CD4-positive, alpha-beta T cell (primary cell): ENCODE measurements at regions of chr11 and their contacts with region 1.

Region 1: GRCh38 chr11:111422494-111423249 is 43.6 kb upstream of the POU2AF1 start:
- DNase-seq: peak; percentile 10 to 59 (median 30)
- ATAC-seq: peak; percentile 64
- H3K4me3 ChIP-seq: no peak overlapping the region
- H3K4me3 Mint-ChIP-seq: no peak overlapping the region
- H3K27ac ChIP-seq: no peak overlapping the region
- H3K27ac Mint-ChIP-seq: no peak overlapping the region
- H3K4me1 ChIP-seq: peaks cover 3% of the 10 kb centered on the region
- H3K4me1 Mint-ChIP-seq: peaks cover 6% of the 10 kb centered on the region
- H3K27me3 ChIP-seq: no peaks in the 10 kb centered on the region
- H3K27me3 Mint-ChIP-seq: no peaks in the 10 kb centered on the region
- CTCF ChIP-seq: peak; percentile 66

Region 2: DNA sequence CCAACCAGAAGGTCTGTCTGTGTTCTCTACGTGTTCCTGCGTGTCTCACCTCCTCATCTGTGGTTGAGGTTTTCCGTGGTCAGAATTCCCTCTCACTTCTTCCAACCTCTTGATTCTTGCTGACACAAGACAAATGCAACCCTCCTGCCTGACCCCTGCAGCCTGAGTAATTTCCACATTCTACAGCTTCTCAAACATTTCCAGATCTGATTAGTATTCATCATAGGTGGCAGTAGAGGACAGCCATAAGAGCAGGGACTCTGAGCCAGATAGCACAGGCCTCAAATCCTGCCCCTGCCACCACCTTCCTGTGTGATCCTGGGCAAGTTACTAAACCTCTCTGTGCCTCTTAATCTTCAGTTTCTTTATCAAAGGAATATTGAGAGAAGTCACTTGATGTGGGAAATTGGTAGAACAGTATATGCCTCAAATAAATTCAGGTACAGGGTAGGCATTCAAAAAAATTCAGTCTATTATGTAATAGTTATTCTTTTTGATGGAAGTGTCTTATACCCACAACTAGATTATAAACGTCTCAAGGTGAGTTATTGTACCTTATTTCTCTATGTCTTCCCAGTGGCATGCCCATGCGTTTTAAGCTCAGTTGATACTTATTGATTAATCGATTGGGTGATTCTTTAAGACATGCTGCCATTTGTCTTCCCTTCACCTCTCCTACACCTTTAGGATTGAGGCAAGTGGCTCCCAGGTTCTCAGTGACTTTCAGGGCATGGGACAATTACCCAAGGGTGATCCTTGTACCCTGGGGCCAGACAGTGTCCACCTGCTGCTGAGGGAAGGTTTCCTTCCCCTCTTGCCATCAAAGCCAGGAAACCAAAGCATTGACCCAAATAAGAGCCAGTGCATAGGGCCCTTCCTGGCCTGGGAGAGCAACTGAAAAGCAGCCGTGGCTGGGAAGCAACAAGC is 63.2 kb before region 1 on chr11:
- CTCF ChIA-PET with region 1: no interaction called
- POLR2A ChIA-PET with region 1: no interaction called
- intact Hi-C with region 1: loop called in 1 of 2 experiments (anchors 5 kb)
- DNase-seq: peak in 2 of 14 experiments; percentile 13 to 15
- ATAC-seq: no peak
- H3K4me3 ChIP-seq: no peak overlapping the region
- H3K4me3 Mint-ChIP-seq: no peak overlapping the region
- H3K27ac ChIP-seq: no peak overlapping the region
- H3K27ac Mint-ChIP-seq: no peak overlapping the region
- H3K4me1 ChIP-seq: no peaks in the 10 kb centered on the region
- H3K4me1 Mint-ChIP-seq: no peaks in the 10 kb centered on the region
- H3K27me3 ChIP-seq: no peaks in the 10 kb centered on the region
- H3K27me3 Mint-ChIP-seq: no peaks in the 10 kb centered on the region
- CTCF ChIP-seq: no peak

Region 3: GRCh38 chr11:111370902-111371578 is 51.6 kb before region 1 on chr11:
- CTCF ChIA-PET with region 1: no interaction called
- POLR2A ChIA-PET with region 1: no interaction called
- intact Hi-C with region 1: loop called in 1 of 2 experiments (anchors 5 kb)
- DNase-seq: no peak
- ATAC-seq: no peak
- H3K4me3 ChIP-seq: no peak overlapping the region
- H3K4me3 Mint-ChIP-seq: no peak overlapping the region
- H3K27ac ChIP-seq: no peak overlapping the region
- H3K27ac Mint-ChIP-seq: no peak overlapping the region
- H3K4me1 ChIP-seq: no peaks in the 10 kb centered on the region
- H3K4me1 Mint-ChIP-seq: peaks cover 4% of the 10 kb centered on the region
- H3K27me3 ChIP-seq: no peaks in the 10 kb centered on the region
- H3K27me3 Mint-ChIP-seq: no peaks in the 10 kb centered on the region
- CTCF ChIP-seq: no peak

Region 4: DNA sequence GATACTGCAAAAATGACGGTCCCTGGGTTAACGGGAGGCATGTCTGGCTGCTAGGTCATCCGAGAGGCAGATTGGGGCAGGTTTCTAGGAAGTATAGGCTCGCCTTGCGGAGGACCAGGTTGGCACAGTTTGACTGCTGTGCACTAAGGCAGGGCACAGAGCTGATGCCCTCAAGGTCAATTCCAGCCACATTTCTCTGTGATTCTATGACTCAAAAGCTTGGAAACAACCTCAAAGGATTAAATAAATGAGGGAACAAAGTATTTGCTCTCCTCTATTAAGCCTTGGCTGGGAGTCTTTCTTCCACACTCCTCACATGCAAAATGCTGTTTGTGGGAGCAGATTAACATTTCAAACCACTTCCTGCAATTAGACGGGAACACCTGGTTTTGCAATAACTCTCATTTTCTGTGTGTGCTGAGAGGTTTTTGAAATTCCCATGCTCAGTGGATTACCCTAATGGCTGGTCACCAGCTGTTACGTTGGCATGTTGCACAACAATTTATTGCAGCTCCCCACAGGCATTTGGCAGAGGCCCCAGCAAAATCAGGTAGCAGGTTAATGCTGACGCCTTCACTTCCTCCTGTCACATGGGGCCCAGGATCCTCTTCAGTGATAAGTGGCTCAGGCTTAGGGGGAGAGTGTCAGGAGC is 899.0 kb after region 1 on chr11:
- CTCF ChIA-PET with region 1: no interaction called
- POLR2A ChIA-PET with region 1: no interaction called
- intact Hi-C with region 1: no loop called
- DNase-seq: peak in 4 of 14 experiments; percentile 13 to 27 (median 18)
- ATAC-seq: peak; percentile 49
- H3K4me3 ChIP-seq: no peak overlapping the region
- H3K4me3 Mint-ChIP-seq: peak overlapping the region; percentile 42
- H3K27ac ChIP-seq: no peak overlapping the region
- H3K27ac Mint-ChIP-seq: peak overlapping the region; percentile 34
- H3K4me1 ChIP-seq: peaks cover 16% of the 10 kb centered on the region
- H3K4me1 Mint-ChIP-seq: peaks cover 29% of the 10 kb centered on the region
- H3K27me3 ChIP-seq: no peaks in the 10 kb centered on the region
- H3K27me3 Mint-ChIP-seq: no peaks in the 10 kb centered on the region
- CTCF ChIP-seq: no peak